GM12878 (cell line): ENCODE measurements at regions of chr1 and their contacts with region 1.

Region 1: DNA sequence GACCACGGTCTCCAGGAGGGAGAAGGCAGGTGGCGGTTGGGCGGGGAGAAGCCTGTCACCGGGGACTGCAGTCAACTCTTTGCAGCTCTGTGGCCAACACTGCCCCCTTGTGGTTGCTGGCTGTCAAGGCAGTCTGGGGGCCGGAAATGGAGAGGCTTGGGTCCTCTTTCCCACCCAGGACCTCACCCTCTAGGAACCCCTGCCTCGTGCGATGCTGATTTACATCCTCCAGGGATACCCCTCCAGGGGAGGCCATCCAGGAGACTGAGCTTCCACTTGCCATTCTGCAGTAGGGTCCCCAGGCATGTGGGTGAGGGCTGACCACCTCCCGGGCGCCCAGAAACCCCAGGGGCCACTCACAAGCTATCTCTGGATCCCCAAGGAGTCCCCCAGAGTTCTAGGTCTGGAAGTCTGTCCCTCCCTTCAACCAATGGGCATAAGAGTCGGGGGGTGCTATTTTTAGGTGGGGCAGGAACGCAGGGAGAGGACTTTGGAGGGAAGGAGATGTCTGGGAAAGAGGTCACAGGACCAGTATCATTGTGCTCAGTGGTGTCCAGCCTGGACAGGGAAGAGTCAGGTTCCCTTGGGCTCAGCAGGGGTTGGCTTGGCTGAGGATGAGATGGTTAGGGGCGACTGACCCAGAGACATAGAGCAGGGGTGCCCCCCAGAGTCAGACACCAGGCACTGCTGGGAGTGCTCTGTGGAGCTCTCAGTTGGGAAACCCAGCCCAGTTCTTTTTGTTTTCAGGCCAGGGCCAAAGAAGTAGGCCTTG is 7.1 kb upstream of the GPR61 start:
- DNase-seq: no peak
- ATAC-seq: peak; percentile 93
- H3K4me3 ChIP-seq: peak overlapping the region; percentile 41; the same call in 1 of the 2 replicates
- H3K27ac ChIP-seq: peak overlapping the region; percentile 56
- H3K4me1 ChIP-seq: peaks cover 14% of the 10 kb centered on the region
- H3K27me3 ChIP-seq: no peaks in the 10 kb centered on the region
- CTCF ChIP-seq: peak; percentile 96 to 99 (median 97)
- EP300 ChIP-seq: no peak
- POLR2A ChIP-seq: no peak
- RAD21 ChIP-seq: peak; percentile 92

Region 2: DNA sequence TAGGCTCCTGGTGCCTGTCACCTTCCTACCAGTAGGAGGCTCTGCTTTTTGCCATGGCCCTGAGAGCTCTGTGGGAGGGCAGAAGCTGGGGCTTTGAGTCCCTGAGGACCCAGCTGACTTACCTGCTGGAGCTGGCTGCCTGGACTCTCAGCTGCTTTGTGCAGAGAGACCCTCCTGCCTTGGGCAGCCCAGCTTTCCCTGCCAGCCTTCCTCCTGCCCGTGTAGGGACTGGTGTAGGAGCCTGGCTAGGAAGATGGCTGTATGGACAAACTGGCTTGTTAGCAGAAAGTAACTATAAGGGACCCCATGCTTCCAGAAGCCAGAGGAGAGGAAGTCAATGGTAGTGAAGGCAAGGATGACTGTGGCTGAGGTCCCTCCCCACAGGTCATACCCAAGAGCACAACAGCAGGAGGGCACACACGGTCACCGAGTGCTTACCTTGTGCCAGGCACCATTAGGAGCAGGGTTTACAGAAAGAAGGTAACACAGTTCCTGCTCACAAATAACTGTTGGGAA is 292.9 kb before region 1 on chr1:
- CTCF ChIA-PET with region 1: interaction called, 11 read pairs
- POLR2A ChIA-PET with region 1: no interaction called
- RAD21 ChIA-PET with region 1: interaction called, 3 read pairs
- SMC1A ChIA-PET with region 1: interaction called, 4 read pairs
- in situ Hi-C with region 1: no loop called
- intact Hi-C with region 1: no loop called
- DNase-seq: no peak
- ATAC-seq: peak; percentile 92
- H3K4me3 ChIP-seq: no peak overlapping the region
- H3K27ac ChIP-seq: no peak overlapping the region
- H3K4me1 ChIP-seq: no peaks in the 10 kb centered on the region
- H3K27me3 ChIP-seq: no peaks in the 10 kb centered on the region
- CTCF ChIP-seq: peak; percentile 17 to 66 (median 47); a peak in 5 of 6 replicates
- EP300 ChIP-seq: no peak
- POLR2A ChIP-seq: peak; percentile 58
- RAD21 ChIP-seq: no peak

Region 3: DNA sequence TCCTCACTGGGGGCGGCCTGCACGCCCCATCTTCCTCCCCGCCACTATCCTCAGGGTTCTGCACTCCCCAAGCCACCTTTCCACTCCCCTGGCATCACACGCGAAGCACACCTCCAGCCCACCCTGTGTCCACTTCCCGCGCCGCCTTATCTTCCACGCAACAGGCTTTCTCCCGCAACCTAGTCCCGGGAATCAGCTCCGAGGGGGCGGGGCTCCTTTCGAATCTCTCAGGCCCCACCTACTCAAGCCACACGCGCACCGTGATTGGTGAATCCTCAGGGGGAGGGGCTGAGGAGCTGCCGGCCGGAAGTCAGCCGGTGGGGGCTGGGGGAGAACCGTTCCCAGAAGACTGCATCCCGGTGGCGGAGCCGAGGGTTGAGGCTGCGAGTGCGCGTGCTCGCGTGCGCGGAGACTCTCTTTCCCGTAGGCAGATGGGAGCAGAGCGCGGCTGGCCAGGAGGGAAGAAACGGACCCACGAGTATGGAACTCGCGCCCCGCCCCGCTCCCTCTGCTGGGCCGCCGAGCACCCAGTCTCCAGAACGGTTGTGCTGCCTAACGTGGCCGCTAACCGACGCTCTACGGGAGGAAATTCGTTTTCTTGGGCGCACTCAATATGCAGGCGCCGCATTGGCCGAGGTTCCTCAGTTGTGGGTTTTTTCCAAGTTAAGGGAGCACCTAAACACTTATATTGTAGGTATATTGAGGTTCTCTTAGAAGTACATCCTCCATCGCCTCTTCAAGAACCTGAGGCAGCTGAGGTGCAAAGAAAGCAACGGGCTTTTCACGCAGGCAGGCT is 249.4 kb before region 1 on chr1 and contains the start of gene PSRC1:
- CTCF ChIA-PET with region 1: interaction called, 122 read pairs
- POLR2A ChIA-PET with region 1: no interaction called
- RAD21 ChIA-PET with region 1: interaction called, 29 read pairs
- SMC1A ChIA-PET with region 1: interaction called, 12 read pairs
- in situ Hi-C with region 1: no loop called
- intact Hi-C with region 1: no loop called
- DNase-seq: peak; percentile 62
- ATAC-seq: peak; percentile 99
- H3K4me3 ChIP-seq: peak within 1 kb of the TSS; percentile 86
- H3K27ac ChIP-seq: peak within 1 kb of the TSS; percentile 83
- H3K4me1 ChIP-seq: peaks cover 3% of the 10 kb centered on the region
- H3K27me3 ChIP-seq: no peaks in the 10 kb centered on the region
- CTCF ChIP-seq: peak; percentile 51 to 61 (median 55)
- EP300 ChIP-seq: no peak
- POLR2A ChIP-seq: peak; percentile 87
- RAD21 ChIP-seq: peak; percentile 50
- polyA plus RNA-seq, gene PSRC1: 1.2 to 2.0 TPM

Region 4: DNA sequence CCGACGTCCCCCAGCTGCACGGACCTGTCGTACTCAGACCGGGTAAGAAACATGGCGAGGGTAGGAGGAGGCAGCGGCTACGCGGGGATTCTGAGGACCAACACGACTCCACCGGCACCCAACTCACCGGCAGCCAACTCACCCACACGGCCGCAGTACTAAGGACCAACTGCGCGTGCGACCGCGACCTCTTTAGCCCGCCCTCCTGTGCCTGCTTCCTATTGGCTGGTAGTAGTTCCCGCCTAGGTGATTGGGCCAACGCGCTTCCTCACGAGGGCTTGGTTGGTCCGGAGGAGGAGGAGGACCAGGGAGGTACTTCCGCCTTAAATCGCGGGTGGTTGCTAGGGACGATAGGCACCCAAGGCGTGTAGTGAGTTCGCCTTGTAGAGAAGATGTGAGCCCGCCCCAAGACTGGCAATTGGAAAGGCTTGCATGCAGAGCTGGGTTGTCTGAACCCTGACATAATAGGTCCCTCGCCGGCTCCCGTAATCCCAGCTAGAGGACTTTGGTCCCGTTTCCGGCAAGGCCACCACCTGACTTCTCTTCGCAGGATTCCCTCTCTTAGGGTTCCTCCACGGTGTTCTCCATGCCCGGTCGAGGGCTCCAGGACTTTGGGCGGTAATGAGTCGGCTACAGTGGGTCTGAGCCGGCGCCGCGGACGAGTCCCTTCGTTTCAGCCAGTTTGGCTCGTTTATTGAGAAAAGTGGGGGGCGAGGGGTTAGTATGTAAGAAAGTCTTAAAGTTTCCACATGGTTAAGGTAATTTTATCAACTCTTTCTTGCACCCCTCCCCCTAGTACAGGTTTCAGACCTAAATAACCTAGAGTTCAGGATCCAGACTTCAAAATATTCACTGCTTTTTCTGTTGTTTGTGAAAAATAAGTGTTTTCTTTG is 106.0 kb before region 1 on chr1 and contains the start of gene PSMA5:
- CTCF ChIA-PET with region 1: interaction called, 32 read pairs
- POLR2A ChIA-PET with region 1: no interaction called
- RAD21 ChIA-PET with region 1: interaction called, 7 read pairs
- SMC1A ChIA-PET with region 1: interaction called, 8 read pairs
- in situ Hi-C with region 1: loop called (anchors 5 kb)
- intact Hi-C with region 1: loop called (anchors 5 kb)
- DNase-seq: peak; percentile 99
- ATAC-seq: peak; percentile 99
- H3K4me3 ChIP-seq: peak within 1 kb of the TSS; percentile 98
- H3K27ac ChIP-seq: peak within 1 kb of the TSS; percentile 89
- H3K4me1 ChIP-seq: no peaks in the 10 kb centered on the region; the same call in 1 of the 2 replicates
- H3K27me3 ChIP-seq: no peaks in the 10 kb centered on the region
- CTCF ChIP-seq: no peak
- EP300 ChIP-seq: peak in 1 of 2 experiments; percentile 47; a peak in 1 of 4 replicates
- POLR2A ChIP-seq: peak; percentile 100
- RAD21 ChIP-seq: no peak
- polyA plus RNA-seq, gene PSMA5: 267 to 271 TPM

Region 5: GRCh38 chr1:109509176-109510134 is 23.1 kb before region 1 on chr1 and contains the start of gene AMIGO1:
- CTCF ChIA-PET with region 1: interaction called, 1,280 read pairs
- POLR2A ChIA-PET with region 1: interaction called, 10 read pairs
- RAD21 ChIA-PET with region 1: interaction called, 47 read pairs
- SMC1A ChIA-PET with region 1: interaction called, 205 read pairs
- in situ Hi-C with region 1: no loop called
- intact Hi-C with region 1: no loop called
- DNase-seq: no peak
- ATAC-seq: peak; percentile 57
- H3K4me3 ChIP-seq: peak within 1 kb of the TSS; percentile 69
- H3K27ac ChIP-seq: no peak within 1 kb of the TSS
- H3K4me1 ChIP-seq: 0 out of 2 replicates have a peak, but pooled peaks cover 3% of the 10 kb centered on the region
- H3K27me3 ChIP-seq: no peaks in the 10 kb centered on the region
- CTCF ChIP-seq: no peak
- EP300 ChIP-seq: no peak
- POLR2A ChIP-seq: no peak
- RAD21 ChIP-seq: no peak
- polyA plus RNA-seq, gene AMIGO1: 0.02 to 0.11 TPM